ENCODE measurements at regions of chr3 and their contacts with region 1.

Region 1: GRCh38 chr3:24494618-24495325 is at the start of gene THRB:
- DNase-seq: peak; percentile 77 to 85 (median 84)
- ATAC-seq: peak; percentile 73
- H3K4me3 ChIP-seq: peak within 1 kb of the TSS; percentile 64
- H3K27ac ChIP-seq: peak within 1 kb of the TSS; percentile 75
- H3K4me1 ChIP-seq: peaks cover 22 to 27% of the 10 kb centered on the region in 2 experiments; a peak in 4 of 5 replicates
- H3K27me3 ChIP-seq: no peaks in the 10 kb centered on the region
- CTCF ChIP-seq: peak in 2 of 3 experiments; percentile 31 to 54; a peak in 2 of 6 replicates
- EP300 ChIP-seq: no peak
- POLR2A ChIP-seq: peak; percentile 43
- RAD21 ChIP-seq: 0 out of 4 replicates have a peak, but pooled peaks of 1 of the 2 experiments have one; percentile 3
- polyA plus RNA-seq, gene THRB: 1.7 to 3.0 TPM

Region 2: GRCh38 chr3:23916886-23917678 is 577.7 kb before region 1 on chr3 and contains the starts of genes NKIRAS1 and RPL15:
- CTCF ChIA-PET with region 1: no interaction called
- POLR2A ChIA-PET with region 1: interaction called, 3 read pairs
- in situ Hi-C with region 1: no loop called
- intact Hi-C with region 1: loop called (anchors 10 kb)
- DNase-seq: peak; percentile 94 to 99 (median 96)
- ATAC-seq: peak; percentile 93
- H3K4me3 ChIP-seq: peak within 1 kb of the TSS; percentile 73
- H3K27ac ChIP-seq: peak within 1 kb of the TSS; percentile 91
- H3K4me1 ChIP-seq: peaks cover 6 to 19% of the 10 kb centered on the region in 2 experiments
- H3K27me3 ChIP-seq: no peaks in the 10 kb centered on the region
- CTCF ChIP-seq: peak; percentile 28 to 45 (median 37); a peak in 4 of 6 replicates
- EP300 ChIP-seq: peak; percentile 47
- POLR2A ChIP-seq: peak; percentile 100
- RAD21 ChIP-seq: no peak; a peak in 1 of 4 replicates
- polyA plus RNA-seq, gene NKIRAS1: 5.5 to 5.6 TPM
- polyA plus RNA-seq, gene RPL15: 7,800 to 8,850 TPM

Region 3: GRCh38 chr3:24185738-24186384 is 308.9 kb before region 1 on chr3:
- CTCF ChIA-PET with region 1: no interaction called
- POLR2A ChIA-PET with region 1: no interaction called
- in situ Hi-C with region 1: no loop called
- intact Hi-C with region 1: loop called (anchors 5 kb)
- DNase-seq: peak; percentile 88 to 94 (median 90)
- ATAC-seq: peak; percentile 98
- H3K4me3 ChIP-seq: no peak overlapping the region
- H3K27ac ChIP-seq: peak overlapping the region; percentile 76
- H3K4me1 ChIP-seq: peaks cover 4 to 8% of the 10 kb centered on the region in 2 experiments; a peak in 3 of 5 replicates
- H3K27me3 ChIP-seq: no peaks in the 10 kb centered on the region
- CTCF ChIP-seq: peak; percentile 92 to 93 (median 92)
- EP300 ChIP-seq: peak; percentile 87
- POLR2A ChIP-seq: no peak
- RAD21 ChIP-seq: peak; percentile 61 to 84

Region 4: GRCh38 chr3:24351779-24352469 is 142.8 kb before region 1 on chr3:
- CTCF ChIA-PET with region 1: no interaction called
- POLR2A ChIA-PET with region 1: interaction called, 4 read pairs
- in situ Hi-C with region 1: no loop called
- intact Hi-C with region 1: loop called (anchors 1 kb)
- DNase-seq: peak; percentile 49 to 95 (median 66)
- ATAC-seq: peak; percentile 86
- H3K4me3 ChIP-seq: no peak overlapping the region
- H3K27ac ChIP-seq: peak overlapping the region; percentile 89
- H3K4me1 ChIP-seq: peaks cover 3 to 56% of the 10 kb centered on the region in 2 experiments
- H3K27me3 ChIP-seq: no peaks in the 10 kb centered on the region
- CTCF ChIP-seq: no peak
- EP300 ChIP-seq: peak; percentile 93
- POLR2A ChIP-seq: no peak
- RAD21 ChIP-seq: peak in 1 of 2 experiments; percentile 48; a peak in 2 of 4 replicates

Region 5: DNA sequence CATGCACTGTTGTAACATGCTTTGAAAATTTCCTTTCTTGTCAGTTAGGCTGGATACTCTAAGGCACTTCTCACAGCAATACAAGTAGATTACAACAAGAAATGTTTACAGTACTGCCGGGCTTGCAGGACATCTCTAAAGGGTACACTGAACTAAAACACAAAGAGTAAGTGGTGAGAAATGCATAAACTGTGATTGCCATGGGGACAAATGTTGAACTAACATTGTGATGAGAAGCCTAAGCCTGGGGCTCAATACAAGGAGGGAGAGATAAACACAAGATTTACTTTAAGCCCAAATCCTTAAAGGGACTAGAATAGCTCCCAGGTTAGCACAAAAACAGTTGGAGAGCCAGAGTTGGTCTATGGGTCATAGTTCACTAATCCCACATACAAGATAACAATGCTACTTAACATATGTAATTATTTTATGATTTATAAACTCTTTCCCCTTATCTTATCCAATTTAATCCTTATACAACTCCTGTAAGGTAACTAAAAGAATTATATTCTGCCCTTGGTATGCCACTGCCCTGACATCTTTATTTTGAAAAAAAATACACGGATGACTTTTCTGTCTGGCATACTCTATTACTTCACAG is 127.0 kb before region 1 on chr3:
- CTCF ChIA-PET with region 1: no interaction called
- POLR2A ChIA-PET with region 1: no interaction called
- in situ Hi-C with region 1: no loop called
- intact Hi-C with region 1: no loop called
- DNase-seq: no peak
- ATAC-seq: no peak
- H3K4me3 ChIP-seq: no peak overlapping the region
- H3K27ac ChIP-seq: no peak overlapping the region
- H3K4me1 ChIP-seq: peaks cover 0 to 13% of the 10 kb centered on the region in 2 experiments; a peak in 3 of 5 replicates
- H3K27me3 ChIP-seq: no peaks in the 10 kb centered on the region
- CTCF ChIP-seq: no peak
- EP300 ChIP-seq: no peak
- POLR2A ChIP-seq: no peak
- RAD21 ChIP-seq: no peak

Region 6: DNA sequence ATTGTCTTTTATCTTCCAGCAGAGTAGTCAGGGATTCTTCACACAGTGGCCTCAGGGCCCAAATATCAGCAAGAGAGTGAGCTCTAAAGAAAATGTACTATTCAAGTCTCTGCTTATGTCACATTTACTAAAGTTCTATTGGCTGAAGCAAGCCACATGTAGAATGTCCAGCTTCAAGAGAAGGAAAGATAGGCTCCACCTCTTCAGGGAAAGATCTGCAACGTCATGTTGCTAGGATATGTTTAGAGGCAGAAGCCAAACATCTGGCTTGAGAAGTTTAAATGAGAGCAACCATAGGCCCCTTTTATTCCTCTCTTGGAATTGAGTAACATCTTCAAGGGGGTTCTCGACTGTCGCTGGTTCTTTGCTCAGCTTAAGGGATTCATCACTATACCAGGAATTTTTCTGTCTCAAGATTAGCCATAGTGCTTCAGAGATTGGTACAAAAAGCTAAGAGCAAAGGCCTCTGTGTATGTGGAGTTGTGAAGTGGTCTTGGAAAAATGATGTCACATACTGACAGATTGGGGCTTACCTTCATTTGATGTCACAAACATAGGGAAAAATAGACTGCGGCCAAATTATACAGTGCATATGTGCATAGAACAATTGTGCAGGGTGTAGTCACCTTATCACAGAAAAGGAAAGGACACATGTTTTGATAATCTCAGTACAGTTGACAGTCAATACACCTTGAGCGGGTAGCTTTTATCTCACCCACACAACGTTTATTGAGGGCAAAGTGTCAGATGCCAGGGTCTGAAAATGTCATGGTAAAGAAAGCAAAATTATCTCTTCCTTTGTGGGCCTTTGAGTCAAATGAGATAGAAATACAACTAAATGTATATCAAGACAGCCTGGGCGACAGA is 11.1 kb after region 1 on chr3:
- CTCF ChIA-PET with region 1: no interaction called
- POLR2A ChIA-PET with region 1: interaction called, 19 read pairs
- in situ Hi-C with region 1: no loop called
- intact Hi-C with region 1: no loop called
- DNase-seq: peak; percentile 39 to 78 (median 61)
- ATAC-seq: peak; percentile 88
- H3K4me3 ChIP-seq: no peak overlapping the region
- H3K27ac ChIP-seq: peak overlapping the region; percentile 40; the same call in 2 of the 3 replicates
- H3K4me1 ChIP-seq: peaks cover 0 to 37% of the 10 kb centered on the region in 2 experiments; a peak in 3 of 5 replicates
- H3K27me3 ChIP-seq: no peaks in the 10 kb centered on the region
- CTCF ChIP-seq: no peak
- EP300 ChIP-seq: peak; percentile 72; the same call in 1 of the 2 replicates
- POLR2A ChIP-seq: no peak
- RAD21 ChIP-seq: no peak

Region 7: GRCh38 chr3:24582431-24583403 is 87.9 kb after region 1 on chr3:
- CTCF ChIA-PET with region 1: no interaction called
- POLR2A ChIA-PET with region 1: no interaction called
- in situ Hi-C with region 1: loop called (anchors 5 kb)
- intact Hi-C with region 1: loop called (anchors 1 kb)
- DNase-seq: peak in 2 of 4 experiments; percentile 33 to 41
- ATAC-seq: peak; percentile 68
- H3K4me3 ChIP-seq: no peak overlapping the region
- H3K27ac ChIP-seq: no peak overlapping the region
- H3K4me1 ChIP-seq: peaks cover 6 to 7% of the 10 kb centered on the region in 2 experiments; a peak in 4 of 5 replicates
- H3K27me3 ChIP-seq: no peaks in the 10 kb centered on the region
- CTCF ChIP-seq: peak; percentile 40 to 59 (median 51); a peak in 5 of 6 replicates
- EP300 ChIP-seq: no peak
- POLR2A ChIP-seq: no peak
- RAD21 ChIP-seq: peak; percentile 49 to 71

Region 8: GRCh38 chr3:24722087-24722486 is 227.3 kb after region 1 on chr3:
- CTCF ChIA-PET with region 1: no interaction called
- POLR2A ChIA-PET with region 1: no interaction called
- in situ Hi-C with region 1: no loop called
- intact Hi-C with region 1: no loop called
- DNase-seq: no peak
- ATAC-seq: no peak
- H3K4me3 ChIP-seq: no peak overlapping the region
- H3K27ac ChIP-seq: no peak overlapping the region
- H3K4me1 ChIP-seq: no peaks in the 10 kb centered on the region
- H3K27me3 ChIP-seq: no peaks in the 10 kb centered on the region
- CTCF ChIP-seq: no peak
- EP300 ChIP-seq: no peak
- POLR2A ChIP-seq: no peak
- RAD21 ChIP-seq: no peak